ENCODE measurements at regions of chr18 and their contacts with region 1.

Region 1: DNA sequence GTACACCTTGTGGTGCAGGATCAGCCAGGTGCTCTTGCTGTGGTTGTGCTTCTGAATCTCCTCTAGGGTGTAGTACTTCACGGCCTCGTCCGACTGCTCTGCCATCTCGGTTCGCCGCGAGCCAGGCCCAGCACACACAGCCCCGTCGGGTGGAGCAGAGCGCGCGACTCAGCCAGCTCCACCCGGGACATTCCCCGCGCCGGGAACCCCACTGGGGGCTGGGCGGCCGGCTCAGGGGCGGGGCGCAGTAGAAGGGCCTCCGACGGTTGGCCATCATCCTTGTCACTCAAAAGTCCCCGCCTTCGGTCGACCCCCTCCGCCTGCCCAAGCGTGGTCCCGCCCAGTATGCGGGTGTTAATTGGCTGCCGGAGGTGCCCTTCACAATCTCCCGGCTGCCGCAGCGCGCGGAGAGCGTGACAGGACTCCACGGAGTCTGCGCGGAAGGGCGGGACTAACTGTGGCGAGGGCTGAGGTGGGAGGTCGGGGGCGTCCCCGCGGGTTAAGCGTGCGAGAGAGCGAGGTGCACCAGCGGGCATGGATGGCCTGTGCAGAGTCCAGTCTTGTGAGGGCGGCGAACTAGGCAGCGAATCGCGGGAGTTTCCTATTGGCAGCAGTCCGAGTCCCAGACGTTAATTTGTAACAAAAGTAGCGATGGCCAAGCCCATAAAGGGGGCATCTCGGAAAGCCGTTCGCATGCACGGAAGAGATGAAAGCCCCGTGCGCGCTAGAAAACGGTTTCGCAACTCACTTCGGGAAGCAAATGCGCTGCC is at the start of gene CYB5A:
- DNase-seq: peak; percentile 93
- H3K4me3 Mint-ChIP-seq: peak within 1 kb of the TSS; percentile 94
- H3K27ac Mint-ChIP-seq: peak within 1 kb of the TSS; percentile 78
- H3K4me1 Mint-ChIP-seq: peaks cover 5% of the 10 kb centered on the region
- H3K27me3 Mint-ChIP-seq: peaks cover 15% of the 10 kb centered on the region
- total RNA-seq, gene CYB5A: 36.8 and 37.9 TPM in 2 replicates

Region 2: GRCh38 chr18:74251297-74252038 is 40.5 kb before region 1 on chr18:
- intact Hi-C with region 1: loop called (anchors 5 kb)
- DNase-seq: no peak
- H3K4me3 Mint-ChIP-seq: no peak overlapping the region
- H3K27ac Mint-ChIP-seq: peak overlapping the region; percentile 78
- H3K4me1 Mint-ChIP-seq: peaks cover 37% of the 10 kb centered on the region
- H3K27me3 Mint-ChIP-seq: no peaks in the 10 kb centered on the region

Region 3: DNA sequence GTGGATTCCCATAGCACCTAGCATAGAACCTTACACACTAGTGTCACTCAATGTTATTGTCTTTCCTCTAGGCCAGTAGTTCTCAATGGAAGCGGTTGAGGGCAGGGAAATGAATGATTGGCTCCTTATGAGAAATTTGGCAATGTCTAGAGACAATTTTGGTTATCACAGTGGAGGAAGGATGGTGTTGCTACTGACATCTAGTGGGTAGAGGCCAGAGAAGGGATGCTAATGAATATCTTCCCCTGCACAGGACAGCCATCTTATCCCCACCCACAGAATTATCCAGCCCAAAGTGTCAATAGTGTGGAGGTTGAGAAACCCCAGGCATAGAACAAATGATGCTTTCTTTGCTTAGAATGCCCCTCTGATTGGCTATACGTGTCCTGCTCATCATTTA is 39.4 kb after region 1 on chr18:
- intact Hi-C with region 1: no loop called
- DNase-seq: no peak
- H3K4me3 Mint-ChIP-seq: no peak overlapping the region
- H3K27ac Mint-ChIP-seq: no peak overlapping the region
- H3K4me1 Mint-ChIP-seq: no peaks in the 10 kb centered on the region
- H3K27me3 Mint-ChIP-seq: peaks cover 16% of the 10 kb centered on the region

Measured in activated T-helper 2 cell treated with anti-CD3 and anti-CD28 coated beads, Interferon-gamma antibody, Interleukin-2, Interleukin-4, amounts not matched to agents 10 μg/mL and 5 μg/mL and 100 μg/mL, durations not matched to agents 14 hours and 24 hours and 36 hours (primary cell).